ENCODE measurements at regions of chr9 and their contacts with region 1.

Region 1: DNA sequence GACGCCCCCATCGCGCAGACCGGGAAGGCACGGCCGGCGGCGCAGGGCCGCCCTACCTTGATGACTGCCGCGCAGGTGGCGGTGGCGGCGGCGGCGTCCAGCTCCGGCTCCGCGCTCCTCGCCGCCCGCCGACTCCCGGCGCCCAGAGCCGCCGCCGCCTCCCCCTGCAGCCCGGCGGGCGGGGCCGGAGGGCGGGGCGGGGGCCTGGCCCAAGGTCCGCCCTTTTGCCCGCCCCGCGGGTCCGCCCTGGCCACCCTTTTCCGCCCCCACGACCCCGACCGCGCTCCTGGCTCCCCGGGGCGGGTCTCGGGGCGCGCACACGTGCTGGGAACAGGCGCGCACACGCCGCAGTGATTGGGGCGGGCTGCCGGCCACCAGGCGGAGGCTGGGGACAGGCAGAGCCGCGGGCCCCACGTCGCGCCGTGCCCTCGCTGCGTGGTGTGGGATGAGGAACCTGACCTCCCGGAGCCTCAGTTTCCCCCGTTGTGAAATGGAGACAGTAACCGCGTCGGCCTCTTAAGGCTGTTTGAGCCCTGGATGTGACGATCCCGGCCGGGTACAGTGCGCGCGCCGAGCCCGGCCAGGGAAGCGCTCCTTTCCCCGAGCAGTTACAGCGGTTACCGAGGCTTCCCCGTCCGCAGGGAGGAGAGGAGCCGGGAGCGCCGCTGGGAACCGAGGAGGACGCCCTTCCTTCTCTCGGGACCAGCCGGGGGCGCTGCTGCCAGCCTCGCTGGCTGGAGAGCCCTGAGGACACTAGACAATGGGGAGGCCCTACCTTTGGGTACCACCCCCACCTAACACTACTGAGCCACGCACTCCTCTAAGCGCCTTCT is at the start of gene CORO2A:
- DNase-seq: peak; percentile 59 to 81
- ATAC-seq: peak; percentile 85 to 87 (median 86)
- H3K4me3 ChIP-seq: peak within 1 kb of the TSS; percentile 72
- H3K4me3 Mint-ChIP-seq: peak within 1 kb of the TSS; percentile 89
- H3K27ac ChIP-seq: peak within 1 kb of the TSS; percentile 23
- H3K27ac Mint-ChIP-seq: peak within 1 kb of the TSS in 1 of 2 donors; percentile 58
- H3K4me1 ChIP-seq: peaks cover 19% of the 10 kb centered on the region
- H3K4me1 Mint-ChIP-seq: peaks cover 0 to 13% of the 10 kb centered on the region in 2 donors
- H3K27me3 ChIP-seq: no peaks in the 10 kb centered on the region
- H3K27me3 Mint-ChIP-seq: peaks cover 0 to 5% of the 10 kb centered on the region in 2 donors
- CTCF ChIP-seq: peak; percentile 25
- total RNA-seq, gene CORO2A: 1.9 to 3.6 (median 2.3) TPM

Region 2: GRCh38 chr9:97721396-97721795 is 471.3 kb before region 1 on chr9:
- intact Hi-C with region 1: no loop called
- DNase-seq: no peak
- ATAC-seq: no peak
- H3K4me3 ChIP-seq: no peak overlapping the region
- H3K4me3 Mint-ChIP-seq: no peak overlapping the region
- H3K27ac ChIP-seq: no peak overlapping the region
- H3K27ac Mint-ChIP-seq: no peak overlapping the region
- H3K4me1 ChIP-seq: no peaks in the 10 kb centered on the region
- H3K4me1 Mint-ChIP-seq: no peaks in the 10 kb centered on the region
- H3K27me3 ChIP-seq: no peaks in the 10 kb centered on the region
- H3K27me3 Mint-ChIP-seq: peaks cover 21 to 27% of the 10 kb centered on the region in 2 donors
- CTCF ChIP-seq: no peak

Region 3: GRCh38 chr9:98118640-98119601 is 73.8 kb before region 1 on chr9 and contains the start of gene TRIM14:
- intact Hi-C with region 1: loop called (anchors 1 kb)
- DNase-seq: peak; percentile 55 to 73
- ATAC-seq: peak; percentile 74 to 78 (median 75)
- H3K4me3 ChIP-seq: peak within 1 kb of the TSS; percentile 48
- H3K4me3 Mint-ChIP-seq: peak within 1 kb of the TSS; percentile 91
- H3K27ac ChIP-seq: peak within 1 kb of the TSS; percentile 81
- H3K27ac Mint-ChIP-seq: peak within 1 kb of the TSS; percentile 92 to 95
- H3K4me1 ChIP-seq: peaks cover 30% of the 10 kb centered on the region
- H3K4me1 Mint-ChIP-seq: peaks cover 33 to 34% of the 10 kb centered on the region in 2 donors
- H3K27me3 ChIP-seq: no peaks in the 10 kb centered on the region
- H3K27me3 Mint-ChIP-seq: no peaks in the 10 kb centered on the region
- CTCF ChIP-seq: no peak
- total RNA-seq, gene TRIM14: 45.1 to 66.5 (median 65.3) TPM

Region 4: DNA sequence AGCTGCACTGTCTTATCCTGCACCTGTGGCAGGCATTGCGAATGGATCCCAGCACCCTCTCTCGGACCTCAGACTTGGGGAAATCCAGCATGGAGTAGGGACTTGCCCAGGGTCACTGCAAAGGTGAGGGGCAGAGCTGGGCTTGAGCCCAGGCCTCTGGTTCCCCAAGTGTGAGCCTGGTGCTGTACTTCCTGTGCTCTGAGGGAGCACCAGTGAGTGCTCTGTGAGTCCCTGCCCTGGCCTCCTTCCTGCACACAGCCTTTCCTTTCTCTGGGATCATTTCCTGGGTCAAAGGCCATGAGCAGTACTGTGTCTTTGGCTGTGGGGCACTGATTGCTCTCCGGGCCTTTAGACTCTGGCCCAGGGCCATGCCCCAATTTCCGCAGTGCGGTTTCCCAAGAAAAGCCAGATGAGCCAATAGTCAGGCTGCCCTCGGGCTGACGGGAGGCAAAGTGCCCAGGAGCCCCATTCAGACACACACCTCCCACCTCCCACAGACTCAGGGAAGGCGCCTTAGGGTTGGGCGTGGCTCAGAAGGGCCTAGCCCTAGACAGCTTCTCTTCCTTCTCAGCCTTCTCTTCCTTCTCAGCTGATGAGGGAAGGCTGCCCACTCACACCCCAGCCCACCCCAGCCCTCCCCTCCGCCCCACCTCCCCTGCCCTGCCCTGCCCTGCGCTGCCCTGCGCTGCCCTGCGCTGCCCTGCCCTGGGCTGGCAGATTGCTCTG is 50.4 kb before region 1 on chr9:
- intact Hi-C with region 1: no loop called
- DNase-seq: no peak
- ATAC-seq: no peak
- H3K4me3 ChIP-seq: no peak overlapping the region
- H3K4me3 Mint-ChIP-seq: no peak overlapping the region
- H3K27ac ChIP-seq: no peak overlapping the region
- H3K27ac Mint-ChIP-seq: no peak overlapping the region
- H3K4me1 ChIP-seq: peaks cover 11% of the 10 kb centered on the region
- H3K4me1 Mint-ChIP-seq: peaks cover 0 to 4% of the 10 kb centered on the region in 2 donors
- H3K27me3 ChIP-seq: no peaks in the 10 kb centered on the region
- H3K27me3 Mint-ChIP-seq: no peaks in the 10 kb centered on the region
- CTCF ChIP-seq: no peak

Region 5: DNA sequence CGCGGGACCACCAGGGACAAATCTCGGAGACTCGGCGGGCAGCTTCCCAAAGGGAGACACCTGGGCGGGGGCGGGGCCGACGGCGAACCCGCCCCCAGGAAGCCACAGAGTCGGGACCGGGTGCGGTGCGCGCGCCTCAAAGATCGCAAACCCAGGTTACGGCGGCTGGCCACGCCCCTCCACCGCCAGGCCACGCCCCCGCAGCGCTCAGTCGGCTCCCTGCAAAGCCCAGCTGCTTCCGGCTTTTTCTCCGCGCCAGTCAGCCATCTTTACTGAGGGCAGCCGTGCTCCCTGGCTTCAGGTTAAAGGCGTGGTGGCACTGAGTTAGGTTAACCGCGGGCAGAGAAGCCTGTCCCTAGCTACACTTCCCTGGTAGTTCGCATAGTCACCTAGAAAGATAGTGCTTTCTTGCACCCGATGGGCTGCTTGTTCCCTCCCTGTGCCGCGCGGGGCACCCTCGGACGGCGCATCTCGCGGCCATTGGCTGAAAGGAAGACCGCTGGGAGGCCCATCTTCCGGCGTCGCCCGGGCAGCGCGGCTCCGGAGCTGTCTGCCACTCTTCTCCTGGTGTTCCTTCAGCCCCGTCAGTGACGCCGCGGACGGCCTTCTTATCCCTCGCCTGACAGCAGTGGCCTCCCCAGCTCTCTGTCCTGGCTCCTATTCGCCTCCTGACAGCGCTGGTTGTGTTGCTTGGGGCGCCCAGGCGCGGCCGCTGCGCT is 63.0 kb after region 1 on chr9 and contains the start of gene TBC1D2:
- intact Hi-C with region 1: loop called (anchors 5 kb)
- DNase-seq: peak; percentile 97 to 98
- ATAC-seq: peak; percentile 91 to 97 (median 91)
- H3K4me3 ChIP-seq: peak within 1 kb of the TSS; percentile 97
- H3K4me3 Mint-ChIP-seq: peak within 1 kb of the TSS; percentile 98
- H3K27ac ChIP-seq: peak within 1 kb of the TSS; percentile 95
- H3K27ac Mint-ChIP-seq: peak within 1 kb of the TSS; percentile 95 to 98
- H3K4me1 ChIP-seq: peaks cover 20% of the 10 kb centered on the region
- H3K4me1 Mint-ChIP-seq: peaks cover 33 to 40% of the 10 kb centered on the region in 2 donors
- H3K27me3 ChIP-seq: no peaks in the 10 kb centered on the region
- H3K27me3 Mint-ChIP-seq: no peaks in the 10 kb centered on the region
- CTCF ChIP-seq: no peak
- total RNA-seq, gene TBC1D2: 5.0 to 8.9 (median 7.0) TPM

Region 6: GRCh38 chr9:98410185-98410697 is 217.5 kb after region 1 on chr9:
- intact Hi-C with region 1: no loop called
- DNase-seq: no peak
- ATAC-seq: no peak
- H3K4me3 ChIP-seq: no peak overlapping the region
- H3K4me3 Mint-ChIP-seq: no peak overlapping the region
- H3K27ac ChIP-seq: no peak overlapping the region
- H3K27ac Mint-ChIP-seq: no peak overlapping the region
- H3K4me1 ChIP-seq: peaks cover 3% of the 10 kb centered on the region
- H3K4me1 Mint-ChIP-seq: no peaks in the 10 kb centered on the region
- H3K27me3 ChIP-seq: no peaks in the 10 kb centered on the region
- H3K27me3 Mint-ChIP-seq: peaks cover 20 to 50% of the 10 kb centered on the region in 2 donors
- CTCF ChIP-seq: no peak

Measured in natural killer cell (primary cell).